ENCODE measurements at regions of chr5 and their contacts with region 1.

Region 1: DNA sequence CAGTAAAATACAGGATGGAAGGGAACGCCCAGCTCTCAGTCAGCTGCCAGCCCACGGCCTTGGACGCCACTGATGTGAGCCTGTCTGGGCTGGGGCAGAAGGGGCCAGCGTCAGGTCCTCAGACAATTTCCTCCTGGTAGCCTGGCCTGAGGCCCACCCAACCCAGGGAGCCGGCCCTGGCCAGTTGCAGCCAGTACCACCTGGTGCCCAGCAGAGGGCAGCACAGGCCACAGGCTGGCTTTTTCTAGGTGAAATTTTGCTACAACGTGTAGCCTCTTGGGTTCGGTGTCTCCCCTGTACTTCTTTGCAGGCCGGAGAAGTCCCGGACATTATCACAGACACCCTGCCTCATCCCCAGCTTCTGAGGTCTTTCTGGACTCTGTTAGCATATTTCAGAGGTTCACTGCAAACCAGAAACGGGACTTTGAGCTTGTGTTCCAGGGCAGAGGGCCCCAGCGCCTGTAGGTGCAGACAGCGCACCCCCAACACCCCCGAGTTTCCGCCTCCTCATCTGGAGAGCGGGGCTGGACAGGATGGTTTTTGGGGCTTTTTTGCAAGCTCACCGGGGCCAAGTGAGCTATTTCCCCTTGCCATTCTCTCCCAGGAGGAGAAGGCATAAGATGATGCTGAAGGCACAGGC is 45.9 kb upstream of the KCNMB1 start:
- DNase-seq: peak in 2 of 3 donors; percentile 62 to 66
- ATAC-seq: peak; percentile 88
- H3K4me3 ChIP-seq: no peak overlapping the region
- H3K4me1 ChIP-seq: no peaks in the 10 kb centered on the region
- CTCF ChIP-seq: peak; percentile 90

Region 2: GRCh38 chr5:170411100-170411499 is 24.0 kb before region 1 on chr5:
- intact Hi-C with region 1: no loop called
- DNase-seq: no peak
- ATAC-seq: no peak
- H3K4me3 ChIP-seq: no peak overlapping the region
- H3K4me1 ChIP-seq: no peaks in the 10 kb centered on the region
- CTCF ChIP-seq: no peak

Region 3: GRCh38 chr5:170623576-170624181 is 188.6 kb after region 1 on chr5:
- intact Hi-C with region 1: loop called (anchors 5 to 10 kb)
- DNase-seq: peak in 1 of 3 donors; percentile 24
- ATAC-seq: peak; percentile 53
- H3K4me3 ChIP-seq: no peak overlapping the region
- H3K4me1 ChIP-seq: no peaks in the 10 kb centered on the region
- CTCF ChIP-seq: no peak

Measured in mucosa of descending colon (tissue), 3 donors.